Ascending aorta (tissue), 2 donors: ENCODE measurements at regions of chr19 and their contacts with region 1.

Region 1: DNA sequence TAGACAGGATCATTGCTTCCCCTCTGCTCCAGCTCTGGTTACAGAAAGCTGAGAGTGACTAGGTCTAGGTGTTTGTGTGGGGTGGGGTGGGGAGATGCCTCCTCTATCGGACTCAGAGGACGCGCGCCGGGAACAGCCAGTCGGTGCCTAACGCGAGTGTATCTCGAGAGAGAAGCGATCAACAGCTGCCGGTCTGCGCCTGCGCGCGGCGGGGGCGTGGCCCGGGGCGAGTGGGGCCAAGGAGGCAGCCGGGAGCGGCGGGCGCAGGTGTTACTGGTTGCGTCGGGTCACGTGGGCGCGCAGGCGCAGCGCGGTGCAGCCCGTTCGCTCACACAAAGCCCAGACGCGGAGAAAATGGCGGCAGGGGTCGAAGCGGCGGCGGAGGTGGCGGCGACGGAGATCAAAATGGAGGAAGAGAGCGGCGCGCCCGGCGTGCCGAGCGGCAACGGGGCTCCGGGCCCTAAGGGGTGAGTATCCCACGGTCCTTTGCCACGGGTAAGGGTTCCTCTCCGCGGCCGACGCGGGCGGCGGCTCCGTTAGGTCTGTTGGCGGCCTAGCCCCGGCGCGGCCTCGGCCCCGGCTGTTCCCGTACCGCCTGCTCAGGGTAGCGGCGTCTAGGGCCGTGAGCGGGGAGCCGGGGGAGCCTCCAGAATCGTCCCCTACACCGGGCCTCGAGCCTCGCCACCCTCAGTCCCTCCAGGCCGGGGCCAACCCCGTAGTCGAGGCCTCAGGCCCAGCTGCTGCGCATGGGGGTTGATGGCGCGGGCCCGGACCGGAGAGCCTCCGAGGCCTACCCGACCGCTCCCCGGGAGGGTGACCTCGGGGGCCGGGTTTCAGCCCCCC is at the start of gene HNRNPM:
- DNase-seq: peak; percentile 97 to 100
- H3K4me3 ChIP-seq: peak within 1 kb of the TSS; percentile 81 to 96
- H3K27ac ChIP-seq: peak within 1 kb of the TSS; percentile 93 to 98
- H3K4me1 ChIP-seq: peaks cover 12 to 28% of the 10 kb centered on the region in 2 donors
- H3K27me3 ChIP-seq: no peaks in the 10 kb centered on the region
- CTCF ChIP-seq: no peak
- total RNA-seq, gene HNRNPM: 198 TPM

Region 2: GRCh38 chr19:8363803-8364771 is 80.8 kb before region 1 on chr19 and contains the start of gene ANGPTL4:
- intact Hi-C with region 1: loop called (anchors 2 kb)
- DNase-seq: peak in 1 of 2 donors; percentile 86
- H3K4me3 ChIP-seq: peak within 1 kb of the TSS; percentile 70 to 78
- H3K27ac ChIP-seq: peak within 1 kb of the TSS; percentile 92 to 94
- H3K4me1 ChIP-seq: peaks cover 20 to 38% of the 10 kb centered on the region in 2 donors
- H3K27me3 ChIP-seq: no peaks in the 10 kb centered on the region
- CTCF ChIP-seq: peak in 1 of 3 experiments; percentile 22
- total RNA-seq, gene ANGPTL4: 161 TPM

Region 3: DNA sequence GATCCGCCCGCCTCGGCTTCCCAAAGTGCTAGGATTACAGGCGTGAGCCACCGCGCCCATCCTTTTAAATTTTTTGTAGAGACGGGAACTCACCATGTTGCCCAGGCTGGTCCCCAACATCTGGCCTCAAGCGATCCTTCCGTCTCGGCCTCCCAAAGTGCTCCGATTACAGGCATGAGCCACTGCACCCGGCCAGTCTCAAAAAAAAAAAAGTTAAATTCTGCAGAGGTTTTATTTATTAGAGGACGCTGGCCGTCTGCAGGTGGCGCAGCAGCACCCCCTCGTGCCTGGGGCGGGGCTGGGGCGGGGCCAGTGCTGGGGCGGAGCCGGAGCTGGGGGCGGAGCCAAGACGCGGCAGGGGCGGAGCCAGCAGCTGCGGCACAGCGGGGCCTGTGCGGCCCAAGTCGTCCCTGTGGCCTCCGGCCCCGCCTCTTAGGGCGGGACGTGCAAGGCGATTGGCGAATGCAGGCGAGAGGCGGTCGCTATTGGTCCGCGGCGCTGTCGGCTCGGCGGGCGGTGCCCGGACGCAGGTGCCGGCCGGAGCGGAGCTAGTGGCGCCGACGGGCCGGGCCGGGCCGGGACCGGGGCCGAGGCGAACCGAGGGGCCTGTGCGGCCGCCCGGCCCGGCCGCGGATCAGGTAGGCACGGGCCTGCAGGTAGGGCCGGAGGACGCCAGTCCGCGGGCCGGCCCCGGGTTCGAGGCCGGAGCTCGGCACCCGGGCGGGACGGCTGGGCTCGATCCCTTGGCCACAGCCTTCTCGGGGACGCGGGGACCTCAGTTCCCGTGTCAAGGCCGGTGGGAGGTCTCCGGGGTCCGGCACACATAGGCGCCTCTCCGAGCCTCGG is 31.9 kb before region 1 on chr19 and contains the start of gene MARCHF2:
- intact Hi-C with region 1: loop called (anchors 1 kb)
- DNase-seq: peak; percentile 91 to 98
- H3K4me3 ChIP-seq: peak within 1 kb of the TSS; percentile 94 to 96
- H3K27ac ChIP-seq: peak within 1 kb of the TSS; percentile 49 to 60
- H3K4me1 ChIP-seq: peaks cover 0 to 11% of the 10 kb centered on the region in 2 donors
- H3K27me3 ChIP-seq: no peaks in the 10 kb centered on the region
- CTCF ChIP-seq: peak; percentile 40 to 84 (median 75)
- total RNA-seq, gene MARCHF2: 151 TPM

Region 4: GRCh38 chr19:8423817-8424223 is 21.0 kb before region 1 on chr19:
- intact Hi-C with region 1: loop called (anchors 1 kb)
- DNase-seq: peak; percentile 88 to 98
- H3K4me3 ChIP-seq: peak overlapping the region in 1 of 2 donors; percentile 23
- H3K27ac ChIP-seq: peak overlapping the region; percentile 81 to 92
- H3K4me1 ChIP-seq: peaks cover 0 to 17% of the 10 kb centered on the region in 2 donors
- H3K27me3 ChIP-seq: no peaks in the 10 kb centered on the region
- CTCF ChIP-seq: no peak

Region 5: GRCh38 chr19:8513687-8514504 is 69.0 kb after region 1 on chr19 and contains the start of gene ZNF414:
- intact Hi-C with region 1: loop called (anchors 2 kb)
- DNase-seq: peak; percentile 77 to 98
- H3K4me3 ChIP-seq: peak within 1 kb of the TSS; percentile 70 to 90
- H3K27ac ChIP-seq: peak within 1 kb of the TSS; percentile 96 to 98
- H3K4me1 ChIP-seq: peaks cover 6 to 7% of the 10 kb centered on the region in 2 donors
- H3K27me3 ChIP-seq: no peaks in the 10 kb centered on the region
- CTCF ChIP-seq: no peak
- total RNA-seq, gene ZNF414: 189 TPM